B cell (primary cell): ENCODE measurements at regions of chr17 and their contacts with region 1.

Region 1: DNA sequence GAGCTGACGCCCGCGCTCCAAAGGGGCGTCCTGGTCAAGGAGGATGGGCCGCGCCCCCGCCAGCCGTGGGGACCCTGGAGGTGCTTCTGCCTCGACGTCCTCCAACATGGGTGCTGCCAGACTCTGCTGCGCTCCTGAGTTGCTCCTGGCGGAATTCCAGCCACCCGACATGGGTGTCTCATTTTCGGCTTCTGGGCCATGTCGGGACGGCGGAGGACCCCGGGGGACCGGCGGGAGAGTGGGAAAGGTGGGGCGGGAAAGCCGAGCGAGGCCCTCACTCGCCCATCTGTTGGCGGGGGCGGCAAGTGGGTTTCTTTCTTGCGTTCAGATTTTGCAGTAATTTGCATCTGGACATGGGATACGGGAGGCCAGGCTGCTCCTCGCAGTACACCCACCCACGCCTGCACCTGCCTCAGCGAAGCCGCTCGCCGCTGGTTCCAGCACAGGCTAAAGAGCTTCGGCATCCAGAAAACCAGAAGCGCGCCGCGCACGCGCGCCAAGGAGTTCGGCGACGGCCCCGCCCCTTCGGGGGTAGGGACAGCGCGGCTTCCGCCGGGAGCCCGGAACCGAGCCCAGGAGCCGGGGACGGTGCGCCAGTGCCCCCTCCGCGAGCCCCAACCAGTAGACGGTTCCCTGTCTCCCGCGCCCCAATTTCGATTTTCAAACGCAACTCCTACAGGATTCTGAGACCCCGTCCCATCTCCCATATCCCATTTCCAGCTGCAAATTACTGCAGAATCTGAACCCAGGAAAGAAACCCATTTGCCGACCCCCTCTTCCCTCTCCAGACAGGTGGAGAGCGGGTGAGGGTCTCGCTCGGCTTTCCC is at the start of gene ARMC7:
- DNase-seq: peak; percentile 92
- ATAC-seq: peak; percentile 80
- H3K4me3 ChIP-seq: peak within 1 kb of the TSS; percentile 80 to 94 (median 84)
- H3K4me3 Mint-ChIP-seq: peak within 1 kb of the TSS; percentile 90
- H3K27ac ChIP-seq: peak within 1 kb of the TSS; percentile 54 to 56
- H3K27ac Mint-ChIP-seq: peak within 1 kb of the TSS; percentile 90
- H3K4me1 ChIP-seq: peaks cover 25 to 29% of the 10 kb centered on the region in 2 donors
- H3K4me1 Mint-ChIP-seq: peaks cover 31% of the 10 kb centered on the region
- H3K27me3 ChIP-seq: peaks cover 0 to 2% (median 0%) of the 10 kb centered on the region in 4 experiments
- H3K27me3 Mint-ChIP-seq: no peaks in the 10 kb centered on the region
- CTCF ChIP-seq: no peak
- total RNA-seq, gene ARMC7: 15.7 and 15.9 TPM in 2 replicates

Region 2: GRCh38 chr17:75046582-75047289 is 62.9 kb before region 1 on chr17 and contains the starts of genes ATP5PD and KCTD2:
- CTCF ChIA-PET with region 1: interaction called, 6 read pairs
- POLR2A ChIA-PET with region 1: no interaction called
- intact Hi-C with region 1: loop called (anchors 1 kb)
- DNase-seq: peak; percentile 96
- ATAC-seq: peak; percentile 97
- H3K4me3 ChIP-seq: peak within 1 kb of the TSS; percentile 77 to 97 (median 89)
- H3K4me3 Mint-ChIP-seq: peak within 1 kb of the TSS; percentile 96
- H3K27ac ChIP-seq: peak within 1 kb of the TSS; percentile 46 to 89
- H3K27ac Mint-ChIP-seq: peak within 1 kb of the TSS; percentile 94
- H3K4me1 ChIP-seq: peaks cover 13 to 16% of the 10 kb centered on the region in 2 donors
- H3K4me1 Mint-ChIP-seq: peaks cover 27% of the 10 kb centered on the region
- H3K27me3 ChIP-seq: no peaks in the 10 kb centered on the region
- H3K27me3 Mint-ChIP-seq: no peaks in the 10 kb centered on the region
- CTCF ChIP-seq: no peak
- total RNA-seq, gene ATP5PD: 98.8 and 101 TPM in 2 replicates
- total RNA-seq, gene KCTD2: 23.2 and 24.6 TPM in 2 replicates

Region 3: DNA sequence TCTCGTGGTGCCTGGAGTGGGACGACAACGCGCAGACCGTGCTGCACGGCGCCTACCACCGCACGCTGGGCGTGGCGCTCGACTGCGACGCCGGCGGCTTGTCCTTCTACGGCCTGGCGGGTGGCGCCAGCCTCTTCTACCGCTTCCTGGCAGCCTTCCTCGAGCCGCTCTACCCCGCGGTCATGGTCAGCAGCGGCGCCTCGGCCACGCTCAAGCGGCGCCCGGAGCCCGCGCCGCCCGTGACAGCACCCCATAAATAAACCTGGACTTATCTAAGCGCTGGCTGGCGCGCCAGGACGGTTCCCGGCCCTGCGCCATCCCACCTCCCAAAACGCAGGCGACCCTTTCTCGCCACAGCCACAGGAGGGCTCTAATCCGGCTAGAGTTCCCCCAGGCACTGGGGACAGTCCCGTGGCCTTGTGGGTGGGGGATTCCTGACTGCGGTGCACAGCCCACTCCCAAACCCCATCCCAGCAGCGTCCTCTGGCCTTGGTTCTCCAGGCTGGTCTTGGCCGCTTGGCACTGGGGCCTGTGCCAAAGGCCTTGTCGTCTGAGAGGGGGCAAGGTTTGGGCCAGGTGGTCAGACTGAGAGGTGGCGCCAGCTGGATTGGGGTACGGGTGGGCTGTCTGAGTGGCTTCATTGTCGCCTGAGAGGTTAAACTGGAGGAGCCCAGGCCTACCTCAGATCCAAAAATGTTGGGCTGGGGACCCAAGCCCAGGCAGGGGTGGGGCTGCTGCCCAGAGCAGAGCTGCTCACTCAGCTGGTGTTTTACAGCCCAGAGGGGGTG is 31.9 kb before region 1 on chr17:
- CTCF ChIA-PET with region 1: interaction called, 7 read pairs
- POLR2A ChIA-PET with region 1: interaction called, 3 read pairs
- intact Hi-C with region 1: loop called (anchors 1 kb)
- DNase-seq: peak; percentile 79
- ATAC-seq: peak; percentile 85
- H3K4me3 ChIP-seq: peak overlapping the region in 4 of 5 experiments; percentile 40 to 73 (median 60)
- H3K4me3 Mint-ChIP-seq: peak overlapping the region; percentile 92
- H3K27ac ChIP-seq: peak overlapping the region in 1 of 2 donors; percentile 66
- H3K27ac Mint-ChIP-seq: peak overlapping the region; percentile 88
- H3K4me1 ChIP-seq: peaks cover 21 to 34% of the 10 kb centered on the region in 2 donors
- H3K4me1 Mint-ChIP-seq: peaks cover 27% of the 10 kb centered on the region
- H3K27me3 ChIP-seq: peaks cover 0 to 1% (median 0%) of the 10 kb centered on the region in 4 experiments
- H3K27me3 Mint-ChIP-seq: no peaks in the 10 kb centered on the region
- CTCF ChIP-seq: no peak

Region 4: GRCh38 chr17:75154195-75155106 is 44.8 kb after region 1 on chr17 and contains the start of gene JPT1:
- CTCF ChIA-PET with region 1: interaction called, 14 read pairs
- POLR2A ChIA-PET with region 1: interaction called, 3 read pairs
- intact Hi-C with region 1: loop called (anchors 1 kb)
- DNase-seq: peak; percentile 98
- ATAC-seq: peak; percentile 97
- H3K4me3 ChIP-seq: peak within 1 kb of the TSS; percentile 69 to 83 (median 74)
- H3K4me3 Mint-ChIP-seq: peak within 1 kb of the TSS; percentile 95
- H3K27ac ChIP-seq: peak within 1 kb of the TSS; percentile 2 to 65
- H3K27ac Mint-ChIP-seq: peak within 1 kb of the TSS; percentile 89
- H3K4me1 ChIP-seq: peaks cover 15 to 27% of the 10 kb centered on the region in 2 donors
- H3K4me1 Mint-ChIP-seq: peaks cover 30% of the 10 kb centered on the region
- H3K27me3 ChIP-seq: no peaks in the 10 kb centered on the region
- H3K27me3 Mint-ChIP-seq: no peaks in the 10 kb centered on the region
- CTCF ChIP-seq: no peak
- total RNA-seq, gene JPT1: 37.6 and 37.8 TPM in 2 replicates

Region 5: DNA sequence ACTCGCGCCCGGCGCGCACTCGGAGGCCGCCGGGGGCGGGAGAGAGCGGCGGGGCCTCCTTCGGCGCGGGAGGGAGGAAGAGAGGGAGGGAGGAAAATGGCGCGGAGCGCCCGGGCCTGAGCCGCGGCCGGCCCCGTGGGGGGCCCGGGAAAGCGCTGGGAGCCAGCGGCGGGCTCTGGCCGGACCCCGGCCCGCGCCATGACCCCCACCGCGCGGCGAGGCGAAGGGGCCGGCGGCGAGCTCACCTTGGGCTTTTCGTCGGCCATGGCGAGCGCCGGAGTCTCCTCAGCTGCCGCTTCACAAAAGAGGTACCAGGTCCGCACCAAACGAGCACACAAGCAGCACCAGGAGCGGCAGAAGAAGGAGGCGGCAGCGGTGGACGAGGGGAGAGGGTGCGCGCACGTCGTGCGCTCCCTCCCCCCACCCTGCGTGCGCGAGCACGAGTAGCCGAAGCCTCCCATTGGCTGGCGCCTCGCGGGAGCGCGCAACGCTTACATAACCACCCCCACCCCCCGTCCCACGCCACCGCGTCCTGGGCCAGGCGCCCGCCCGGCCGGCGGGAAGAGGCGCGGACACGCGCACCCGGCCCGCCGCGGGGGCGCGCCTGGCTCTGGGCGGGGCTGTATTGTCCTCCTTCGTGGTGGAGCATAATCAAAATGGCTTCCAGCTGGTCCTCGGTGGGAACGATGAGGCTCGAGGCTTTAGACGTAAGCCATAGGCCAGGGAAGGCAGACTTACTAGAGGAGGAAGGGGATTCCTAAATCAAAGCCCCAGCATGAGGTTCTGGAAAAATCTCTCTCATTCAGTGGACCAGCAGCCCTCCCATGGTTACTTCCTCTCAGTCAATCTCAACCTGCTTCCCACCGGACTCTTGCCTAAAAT is 73.2 kb after region 1 on chr17 and contains the start of gene SUMO2:
- CTCF ChIA-PET with region 1: interaction called, 373 read pairs
- POLR2A ChIA-PET with region 1: interaction called, 4 read pairs
- intact Hi-C with region 1: no loop called
- DNase-seq: peak; percentile 99
- ATAC-seq: peak; percentile 82
- H3K4me3 ChIP-seq: peak within 1 kb of the TSS; percentile 80 to 93 (median 87)
- H3K4me3 Mint-ChIP-seq: peak within 1 kb of the TSS; percentile 90
- H3K27ac ChIP-seq: peak within 1 kb of the TSS; percentile 94 to 96
- H3K27ac Mint-ChIP-seq: peak within 1 kb of the TSS; percentile 99
- H3K4me1 ChIP-seq: peaks cover 15 to 21% of the 10 kb centered on the region in 2 donors
- H3K4me1 Mint-ChIP-seq: peaks cover 26% of the 10 kb centered on the region
- H3K27me3 ChIP-seq: no peaks in the 10 kb centered on the region
- H3K27me3 Mint-ChIP-seq: no peaks in the 10 kb centered on the region
- CTCF ChIP-seq: no peak
- total RNA-seq, gene SUMO2: 229 and 234 TPM in 2 replicates

Region 6: DNA sequence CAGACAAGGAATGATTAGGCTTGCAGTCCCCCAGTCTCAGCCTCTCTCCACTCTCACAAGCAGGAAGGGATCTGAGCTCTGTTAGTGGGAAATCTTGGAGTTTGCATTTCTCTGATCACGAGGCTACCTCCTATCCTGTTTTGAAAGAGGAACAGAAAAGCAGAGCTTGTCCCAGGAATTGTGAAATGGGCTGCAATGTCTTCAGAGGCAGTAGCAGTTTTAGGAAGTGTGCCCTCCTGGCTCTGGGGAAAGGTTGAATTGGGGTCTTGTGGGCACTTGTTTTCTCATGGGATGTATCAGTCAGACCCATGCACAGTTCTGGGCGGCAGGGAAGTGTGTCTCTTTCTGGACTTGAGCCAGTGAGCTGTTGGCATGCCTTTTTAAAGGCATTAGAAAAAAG is 118.7 kb after region 1 on chr17:
- CTCF ChIA-PET with region 1: interaction called, 14 read pairs
- POLR2A ChIA-PET with region 1: no interaction called
- intact Hi-C with region 1: no loop called
- DNase-seq: no peak
- ATAC-seq: no peak
- H3K4me3 ChIP-seq: no peak overlapping the region
- H3K4me3 Mint-ChIP-seq: no peak overlapping the region
- H3K27ac ChIP-seq: no peak overlapping the region
- H3K27ac Mint-ChIP-seq: peak overlapping the region; percentile 53
- H3K4me1 ChIP-seq: no peaks in the 10 kb centered on the region
- H3K4me1 Mint-ChIP-seq: no peaks in the 10 kb centered on the region
- H3K27me3 ChIP-seq: no peaks in the 10 kb centered on the region
- H3K27me3 Mint-ChIP-seq: no peaks in the 10 kb centered on the region
- CTCF ChIP-seq: no peak

Region 7: DNA sequence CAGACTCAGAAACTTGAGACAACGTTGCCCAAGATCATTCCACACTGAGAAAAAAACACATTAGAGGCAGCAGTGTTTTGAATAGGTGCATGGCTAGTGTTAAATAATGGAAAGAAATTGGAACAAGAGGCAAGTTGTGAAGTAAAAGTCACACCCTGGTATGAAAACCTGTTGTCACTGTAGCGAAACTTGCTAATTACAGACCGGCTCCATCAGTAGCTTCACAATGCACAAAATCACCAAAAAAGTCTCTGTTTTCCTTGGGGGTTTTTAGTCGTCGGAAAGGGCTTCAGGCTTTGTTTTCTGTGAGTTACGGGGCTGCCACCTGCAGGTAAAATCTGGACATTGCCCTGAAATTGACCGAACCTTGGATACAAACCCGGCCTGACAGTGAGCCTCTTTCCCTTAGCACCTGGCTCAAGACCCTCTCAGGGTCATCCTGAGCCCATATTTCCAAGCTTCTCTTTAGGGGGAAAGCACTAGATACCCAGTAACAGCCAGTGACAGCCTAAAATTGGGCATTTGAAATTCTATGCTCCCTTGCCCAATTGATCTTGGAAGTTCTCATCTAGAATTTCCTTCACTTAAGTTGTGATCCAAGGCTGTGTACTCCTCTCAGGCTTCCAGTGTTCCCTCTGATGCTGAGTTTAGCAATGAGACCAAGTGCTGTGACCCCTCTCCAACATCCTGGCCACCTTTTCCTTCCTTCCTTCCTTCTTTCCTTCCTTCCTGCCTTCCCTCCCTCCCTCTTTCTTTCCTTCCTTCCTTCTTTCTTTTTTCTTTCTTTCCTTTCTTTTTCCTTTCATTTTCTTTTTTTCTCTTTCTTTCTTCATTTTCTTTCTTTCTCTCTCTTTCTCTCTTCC is 303.1 kb after region 1 on chr17:
- CTCF ChIA-PET with region 1: interaction called, 13 read pairs
- POLR2A ChIA-PET with region 1: no interaction called
- intact Hi-C with region 1: loop called (anchors 1 kb)
- DNase-seq: peak; percentile 90
- ATAC-seq: peak; percentile 94
- H3K4me3 ChIP-seq: peak overlapping the region in 4 of 5 experiments; percentile 9 to 30 (median 23)
- H3K4me3 Mint-ChIP-seq: peak overlapping the region; percentile 68
- H3K27ac ChIP-seq: no peak overlapping the region
- H3K27ac Mint-ChIP-seq: peak overlapping the region; percentile 62
- H3K4me1 ChIP-seq: peaks cover 7 to 14% of the 10 kb centered on the region in 2 donors
- H3K4me1 Mint-ChIP-seq: peaks cover 13% of the 10 kb centered on the region
- H3K27me3 ChIP-seq: no peaks in the 10 kb centered on the region
- H3K27me3 Mint-ChIP-seq: no peaks in the 10 kb centered on the region
- CTCF ChIP-seq: peak; percentile 79

Region 8: DNA sequence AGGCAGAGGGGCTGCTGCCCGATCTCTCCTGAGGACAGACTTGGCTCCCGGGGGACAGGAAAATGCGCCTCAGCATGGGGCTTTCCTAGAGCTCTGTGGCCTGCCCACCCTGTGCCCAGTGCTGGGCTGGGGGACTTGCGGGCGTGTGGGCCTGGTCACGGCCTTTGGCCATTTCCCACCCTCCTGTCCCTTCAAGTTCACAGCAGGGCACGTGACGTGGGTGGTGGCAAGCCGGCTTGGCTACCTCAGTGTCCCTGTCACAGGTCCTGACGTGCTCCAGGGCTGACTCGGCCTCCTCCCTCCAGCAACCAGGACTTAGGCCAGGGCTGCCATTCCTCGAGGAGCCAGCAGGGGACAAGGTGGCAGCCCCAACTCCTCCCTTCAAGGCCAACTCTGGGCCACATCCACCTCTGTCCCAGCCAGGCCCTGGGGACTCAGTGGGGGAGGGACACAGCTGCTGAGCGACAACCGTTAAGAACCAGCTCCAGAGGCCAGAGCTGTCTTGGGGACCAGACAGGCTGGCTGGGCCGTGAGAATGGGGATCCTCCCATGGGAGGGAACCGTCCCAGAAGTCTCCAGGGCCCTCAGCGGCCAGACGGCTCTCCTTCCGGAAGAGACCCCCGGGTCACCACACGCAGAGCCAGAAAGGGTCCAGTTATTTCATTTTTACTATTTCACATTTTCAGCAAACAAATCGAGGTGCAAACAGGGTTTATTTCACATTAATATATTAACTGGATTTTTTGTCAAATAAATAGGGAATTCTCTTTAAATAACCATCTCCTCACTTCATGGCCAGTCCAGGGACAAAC is 735.6 kb after region 1 on chr17:
- CTCF ChIA-PET with region 1: no interaction called
- POLR2A ChIA-PET with region 1: no interaction called
- intact Hi-C with region 1: no loop called
- DNase-seq: peak; percentile 86
- ATAC-seq: peak; percentile 87
- H3K4me3 ChIP-seq: peak overlapping the region in 4 of 5 experiments; percentile 72 to 86 (median 78)
- H3K4me3 Mint-ChIP-seq: peak overlapping the region; percentile 94
- H3K27ac ChIP-seq: peak overlapping the region; percentile 92 to 93
- H3K27ac Mint-ChIP-seq: peak overlapping the region; percentile 97
- H3K4me1 ChIP-seq: peaks cover 17 to 43% of the 10 kb centered on the region in 2 donors
- H3K4me1 Mint-ChIP-seq: peaks cover 26% of the 10 kb centered on the region
- H3K27me3 ChIP-seq: no peaks in the 10 kb centered on the region
- H3K27me3 Mint-ChIP-seq: no peaks in the 10 kb centered on the region
- CTCF ChIP-seq: peak; percentile 83